Spleen (tissue), 13 donors: ENCODE measurements at regions of chr4 and their contacts with region 1.

Region 1: GRCh38 chr4:88378691-88379559 is at the start of gene HERC6:
- DNase-seq: peak; percentile 94
- H3K4me3 ChIP-seq: peak within 1 kb of the TSS; percentile 76 to 99 (median 90)
- H3K27ac ChIP-seq: peak within 1 kb of the TSS; percentile 95 to 100 (median 100)
- H3K4me1 ChIP-seq: peaks cover 0 to 38% (median 20%) of the 10 kb centered on the region in 6 donors
- H3K27me3 ChIP-seq: no peaks in the 10 kb centered on the region
- CTCF ChIP-seq: peak; percentile 49 to 91 (median 77)
- POLR2A ChIP-seq: peak in 1 of 3 donors; percentile 5
- total RNA-seq, gene HERC6: 5.2 to 13.6 (median 11.4) TPM

Region 2: GRCh38 chr4:88284439-88285234 is 94.3 kb before region 1 on chr4 and contains the start of gene PPM1K:
- intact Hi-C with region 1: loop called (anchors 10 kb)
- DNase-seq: peak; percentile 100
- H3K4me3 ChIP-seq: peak within 1 kb of the TSS; percentile 53 to 85 (median 62)
- H3K27ac ChIP-seq: peak within 1 kb of the TSS; percentile 96 to 100 (median 98)
- H3K4me1 ChIP-seq: peaks cover 9 to 53% (median 39%) of the 10 kb centered on the region in 6 donors
- H3K27me3 ChIP-seq: no peaks in the 10 kb centered on the region
- CTCF ChIP-seq: peak in 7 of 11 experiments; percentile 18 to 66 (median 45)
- POLR2A ChIP-seq: peak in 2 of 3 donors; percentile 36 to 88
- total RNA-seq, gene PPM1K: 41.4 to 73.5 (median 48.7) TPM

Region 3: GRCh38 chr4:88456757-88457306 is 77.9 kb after region 1 on chr4 and contains the start of gene HERC5:
- intact Hi-C with region 1: loop called (anchors 10 kb)
- DNase-seq: peak; percentile 97
- H3K4me3 ChIP-seq: peak within 1 kb of the TSS; percentile 74 to 96 (median 88)
- H3K27ac ChIP-seq: peak within 1 kb of the TSS; percentile 82 to 90 (median 87)
- H3K4me1 ChIP-seq: peaks cover 0 to 40% (median 21%) of the 10 kb centered on the region in 6 donors
- H3K27me3 ChIP-seq: no peaks in the 10 kb centered on the region
- CTCF ChIP-seq: peak in 9 of 11 experiments; percentile 43 to 70 (median 55)
- POLR2A ChIP-seq: peak in 2 of 3 donors; percentile 61 to 68
- total RNA-seq, gene HERC5: 7.7 to 19.1 (median 11.3) TPM

Region 4: GRCh38 chr4:88503344-88503743 is 124.4 kb after region 1 on chr4:
- intact Hi-C with region 1: no loop called
- DNase-seq: no peak
- H3K4me3 ChIP-seq: no peak overlapping the region
- H3K27ac ChIP-seq: no peak overlapping the region
- H3K4me1 ChIP-seq: no peaks in the 10 kb centered on the region
- H3K27me3 ChIP-seq: no peaks in the 10 kb centered on the region
- CTCF ChIP-seq: no peak
- POLR2A ChIP-seq: no peak

Region 5: DNA sequence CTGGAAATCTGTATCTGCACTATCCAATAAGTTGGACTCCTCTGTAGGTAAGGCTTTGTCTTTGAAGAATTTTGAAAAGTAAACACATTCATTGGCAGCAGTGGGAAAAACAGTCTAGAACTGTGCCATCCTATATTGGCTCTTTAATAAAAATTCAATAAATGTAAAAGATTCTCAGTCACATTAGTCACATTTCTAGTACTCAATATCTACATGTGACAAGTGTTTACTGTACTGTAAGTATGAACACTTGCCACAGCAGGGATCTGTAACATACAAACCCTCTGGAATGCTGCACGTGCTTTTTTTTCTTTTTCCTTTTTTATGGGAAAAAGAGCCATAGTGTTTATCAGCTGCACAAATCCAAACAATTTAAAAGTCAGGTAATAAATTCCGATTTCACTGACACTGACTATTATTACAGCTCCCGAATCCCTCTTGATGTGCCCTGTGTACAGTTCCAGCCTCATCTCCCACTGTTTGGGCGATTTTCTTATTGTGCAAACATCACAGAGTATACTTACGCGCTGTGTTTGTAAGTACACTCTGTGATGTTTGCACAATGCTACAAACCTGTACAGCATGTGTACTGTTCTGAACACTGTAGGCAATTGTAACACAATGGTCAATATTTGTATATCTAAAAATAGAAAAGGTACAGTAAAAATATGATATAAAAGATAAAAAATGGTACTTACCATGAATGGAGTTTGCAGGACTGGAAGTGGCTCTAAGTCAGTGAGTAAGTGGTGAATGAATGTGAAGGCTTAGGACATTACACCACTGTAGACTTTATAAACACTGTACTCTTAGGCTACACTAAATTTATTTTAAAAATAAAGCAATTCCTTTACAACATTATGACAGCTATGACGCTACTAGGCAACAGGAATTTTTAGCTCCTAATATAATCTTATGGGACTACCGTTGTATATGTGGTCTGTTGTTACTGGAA is 135.9 kb after region 1 on chr4:
- intact Hi-C with region 1: loop called (anchors 10 kb)
- DNase-seq: no peak
- H3K4me3 ChIP-seq: no peak overlapping the region
- H3K27ac ChIP-seq: no peak overlapping the region
- H3K4me1 ChIP-seq: peaks cover 0 to 6% (median 3%) of the 10 kb centered on the region in 6 donors
- H3K27me3 ChIP-seq: no peaks in the 10 kb centered on the region
- CTCF ChIP-seq: no peak
- POLR2A ChIP-seq: no peak